ENCODE measurements at regions of chr12 and their contacts with region 1.

Region 1: GRCh38 chr12:56007564-56008559 is 10.8 kb downstream of the SUOX start:
- DNase-seq: peak; percentile 71
- ATAC-seq: peak; percentile 92
- H3K4me3 Mint-ChIP-seq: peak overlapping the region; percentile 88
- H3K27ac Mint-ChIP-seq: peak overlapping the region; percentile 79
- H3K4me1 Mint-ChIP-seq: peaks cover 9% of the 10 kb centered on the region
- H3K27me3 Mint-ChIP-seq: no peaks in the 10 kb centered on the region
- CTCF ChIP-seq: no peak

Region 2: DNA sequence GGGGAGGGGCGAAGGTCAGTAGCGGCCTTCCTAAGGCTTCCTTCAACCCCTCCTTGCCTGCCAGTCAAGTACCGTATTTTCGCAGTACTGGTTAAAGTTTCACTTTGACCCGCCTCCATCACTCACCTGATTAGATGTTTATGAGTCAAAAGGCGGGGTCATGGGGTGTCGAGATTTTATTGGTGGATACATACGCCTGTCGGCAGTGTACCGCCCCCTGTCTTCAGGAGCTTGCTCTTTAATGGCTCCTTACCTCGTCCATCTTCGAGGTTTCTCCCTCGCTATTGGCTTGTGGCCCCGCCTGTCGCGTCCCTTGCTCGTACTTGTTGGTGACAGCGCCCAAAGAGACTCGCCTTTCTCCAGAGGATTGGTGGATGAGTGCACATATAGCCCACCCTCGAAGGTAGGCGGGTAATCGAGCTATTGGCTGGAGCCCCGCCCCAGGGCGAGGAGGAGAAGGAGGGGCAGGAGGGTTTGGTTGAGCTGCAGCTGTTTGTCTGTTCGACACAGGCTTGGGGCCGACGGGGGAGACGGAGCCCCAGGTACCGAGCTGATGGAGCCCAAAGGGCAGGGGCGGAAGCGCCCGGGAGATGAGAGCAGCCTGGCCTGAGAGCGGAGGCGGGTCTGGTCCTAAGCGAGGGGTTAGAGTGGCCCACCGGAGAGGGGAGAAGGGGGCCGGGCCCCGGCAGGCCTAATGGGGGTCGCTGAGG is 34.1 kb before region 1 on chr12 and contains the start of gene RAB5B:
- CTCF ChIA-PET with region 1: no interaction called
- POLR2A ChIA-PET with region 1: interaction called, 17 read pairs
- intact Hi-C with region 1: loop called (anchors 1 kb)
- DNase-seq: peak; percentile 83
- ATAC-seq: peak; percentile 87
- H3K4me3 Mint-ChIP-seq: no peak within 1 kb of the TSS
- H3K27ac Mint-ChIP-seq: no peak within 1 kb of the TSS
- H3K4me1 Mint-ChIP-seq: peaks cover 27% of the 10 kb centered on the region
- H3K27me3 Mint-ChIP-seq: no peaks in the 10 kb centered on the region
- CTCF ChIP-seq: no peak
- total RNA-seq, gene RAB5B: 82.1 and 83.8 TPM in 2 replicates

Measured in activated B cell treated with CpG ODN at 0.5 μM for 24 hours (primary cell).